ENCODE measurements at regions of chrX and their contacts with region 1.

Region 1: GRCh38 chrX:23403853-23404252 is 69.2 kb downstream of the PTCHD1 start:
- DNase-seq: peak; percentile 24
- H3K4me3 Mint-ChIP-seq: no peak overlapping the region
- H3K27ac Mint-ChIP-seq: no peak overlapping the region
- H3K4me1 Mint-ChIP-seq: peaks cover 9% of the 10 kb centered on the region
- H3K27me3 Mint-ChIP-seq: peaks cover 5% of the 10 kb centered on the region
- CTCF ChIP-seq: peak; percentile 28

Region 2: DNA sequence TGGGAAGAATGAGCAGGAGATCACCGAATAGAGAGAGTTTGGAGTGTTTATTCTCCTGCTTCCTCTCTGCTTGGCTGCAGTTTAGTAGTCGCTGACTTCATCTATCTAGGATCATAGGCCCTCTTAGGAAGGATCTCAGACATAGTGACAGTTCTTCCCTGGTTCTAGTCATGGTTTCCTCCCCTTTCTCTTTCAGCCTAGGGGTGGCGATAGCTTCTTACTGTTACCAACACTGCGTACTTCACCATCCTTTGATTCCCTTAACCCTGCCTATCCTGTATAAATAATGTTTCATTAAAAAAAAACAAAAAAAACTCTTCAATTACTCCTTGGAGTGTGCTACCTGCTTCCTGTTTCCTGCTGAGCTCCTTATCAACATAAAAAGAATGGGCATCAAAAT is 300.3 kb before region 1 on chrX:
- CTCF ChIA-PET with region 1: no interaction called
- intact Hi-C with region 1: no loop called
- DNase-seq: no peak
- H3K4me3 Mint-ChIP-seq: no peak overlapping the region
- H3K27ac Mint-ChIP-seq: no peak overlapping the region
- H3K4me1 Mint-ChIP-seq: no peaks in the 10 kb centered on the region
- H3K27me3 Mint-ChIP-seq: no peaks in the 10 kb centered on the region
- CTCF ChIP-seq: no peak

Region 3: DNA sequence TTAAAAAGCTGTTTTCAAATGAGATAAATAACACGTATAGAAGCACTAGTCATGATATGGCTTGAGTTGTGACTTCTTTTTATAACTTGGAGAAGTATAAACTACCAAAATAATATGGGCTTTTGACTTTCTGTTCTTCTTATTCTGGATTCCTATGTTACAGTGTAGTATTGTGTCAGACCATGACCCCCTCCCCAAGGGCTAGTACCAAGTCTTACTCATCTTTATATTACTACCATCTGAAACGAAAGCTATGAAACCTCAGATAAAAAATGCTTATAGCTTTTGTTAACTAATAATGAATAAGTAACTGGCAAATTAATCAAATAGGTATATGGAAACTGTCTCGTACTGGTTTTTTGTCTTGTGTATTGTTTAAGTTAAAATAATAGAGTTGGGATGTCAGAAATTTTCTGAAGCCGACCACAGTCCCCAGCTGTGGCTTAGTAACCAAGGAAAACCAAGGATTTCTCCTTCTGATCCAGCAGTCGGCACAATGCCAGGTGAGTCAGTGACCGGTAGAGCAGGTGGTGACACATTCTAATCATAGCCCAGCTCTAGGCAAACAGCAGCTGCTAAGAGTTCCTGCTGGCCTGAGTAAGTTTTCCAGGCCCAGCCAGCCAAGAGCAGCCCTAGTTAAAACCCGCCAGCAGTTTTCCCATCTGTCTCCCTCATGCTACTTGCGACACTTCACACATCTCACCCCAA is 100.1 kb after region 1 on chrX:
- CTCF ChIA-PET with region 1: no interaction called
- intact Hi-C with region 1: loop called (anchors 5 kb)
- DNase-seq: peak; percentile 89
- H3K4me3 Mint-ChIP-seq: no peak overlapping the region
- H3K27ac Mint-ChIP-seq: peak overlapping the region; percentile 71
- H3K4me1 Mint-ChIP-seq: peaks cover 50% of the 10 kb centered on the region
- H3K27me3 Mint-ChIP-seq: no peaks in the 10 kb centered on the region
- CTCF ChIP-seq: no peak

Region 4: DNA sequence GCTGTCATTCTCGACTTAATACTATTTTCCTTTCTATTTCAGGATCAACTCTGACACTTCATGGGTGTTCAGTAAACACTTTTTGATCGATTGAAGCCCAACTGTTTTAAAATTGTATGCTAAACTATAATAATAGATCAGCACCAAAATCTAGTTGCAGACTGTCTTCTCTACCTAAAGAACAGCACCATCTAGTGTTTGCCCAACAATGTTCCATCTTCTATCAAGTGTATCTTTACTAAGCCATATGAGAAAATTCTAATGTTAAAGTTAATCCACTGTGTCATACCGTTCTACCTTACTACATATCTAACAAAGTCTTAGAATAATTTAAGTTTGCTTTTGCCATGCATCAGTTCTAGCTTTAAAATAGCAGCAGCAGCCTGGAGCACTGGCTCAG is 150.5 kb after region 1 on chrX:
- CTCF ChIA-PET with region 1: interaction called, 3 read pairs
- intact Hi-C with region 1: loop called (anchors 1 kb)
- DNase-seq: peak; percentile 5
- H3K4me3 Mint-ChIP-seq: no peak overlapping the region
- H3K27ac Mint-ChIP-seq: no peak overlapping the region
- H3K4me1 Mint-ChIP-seq: no peaks in the 10 kb centered on the region
- H3K27me3 Mint-ChIP-seq: no peaks in the 10 kb centered on the region
- CTCF ChIP-seq: peak; percentile 22

Region 5: DNA sequence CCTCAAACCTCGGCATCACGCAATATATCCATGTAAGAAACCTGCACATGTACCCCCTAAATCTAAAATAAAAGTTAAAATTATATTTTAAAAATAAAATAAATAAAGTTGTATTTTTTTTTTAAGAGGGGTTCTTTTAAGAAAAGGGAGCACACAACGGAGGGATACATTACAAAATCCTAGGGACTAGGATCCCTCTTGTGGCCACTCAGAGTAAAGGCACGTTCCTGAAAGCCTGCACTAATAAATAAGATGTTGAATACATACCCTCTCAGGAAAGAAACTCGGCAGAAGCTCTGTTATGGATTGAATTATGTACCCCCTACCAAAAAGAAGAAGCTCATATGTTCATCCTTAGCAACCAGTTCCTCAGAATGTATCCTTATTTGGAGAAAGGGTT is 212.5 kb after region 1 on chrX:
- CTCF ChIA-PET with region 1: no interaction called
- intact Hi-C with region 1: loop called (anchors 2 kb)
- DNase-seq: no peak
- H3K4me3 Mint-ChIP-seq: no peak overlapping the region
- H3K27ac Mint-ChIP-seq: no peak overlapping the region
- H3K4me1 Mint-ChIP-seq: no peaks in the 10 kb centered on the region
- H3K27me3 Mint-ChIP-seq: peaks cover 20% of the 10 kb centered on the region
- CTCF ChIP-seq: peak; percentile 54

Measured in Calu3 (cell line).